ENCODE measurements at regions of chr1 and their contacts with region 1.

Region 1: GRCh38 chr1:47997289-47998200 is at the start of gene TRABD2B:
- DNase-seq: peak; percentile 34
- ATAC-seq: peak; percentile 99
- H3K4me3 ChIP-seq: peak within 1 kb of the TSS; percentile 49
- H3K27ac ChIP-seq: no peak within 1 kb of the TSS
- H3K4me1 ChIP-seq: no peaks in the 10 kb centered on the region
- H3K27me3 ChIP-seq: peaks cover 35% of the 10 kb centered on the region
- CTCF ChIP-seq: peak; percentile 87
- POLR2A ChIP-seq: no peak
- RAD21 ChIP-seq: peak; percentile 53
- total RNA-seq, gene TRABD2B: not detected in 2 replicates

Region 2: GRCh38 chr1:47679301-47679791 is 318.2 kb before region 1 on chr1:
- CTCF ChIA-PET with region 1: no interaction called
- POLR2A ChIA-PET with region 1: no interaction called
- dilution Hi-C with region 1: no loop called
- in situ Hi-C with region 1: no loop called
- intact Hi-C with region 1: no loop called
- DNase-seq: no peak
- ATAC-seq: no peak
- H3K4me3 ChIP-seq: no peak overlapping the region
- H3K27ac ChIP-seq: no peak overlapping the region
- H3K4me1 ChIP-seq: no peaks in the 10 kb centered on the region
- H3K27me3 ChIP-seq: no peaks in the 10 kb centered on the region
- CTCF ChIP-seq: no peak
- POLR2A ChIP-seq: no peak
- RAD21 ChIP-seq: no peak

Region 3: GRCh38 chr1:48202030-48202752 is 204.6 kb after region 1 on chr1:
- CTCF ChIA-PET with region 1: no interaction called
- POLR2A ChIA-PET with region 1: no interaction called
- dilution Hi-C with region 1: no loop called
- in situ Hi-C with region 1: no loop called
- intact Hi-C with region 1: loop called (anchors 10 kb)
- DNase-seq: peak; percentile 81
- ATAC-seq: peak; percentile 97
- H3K4me3 ChIP-seq: no peak overlapping the region
- H3K27ac ChIP-seq: no peak overlapping the region
- H3K4me1 ChIP-seq: no peaks in the 10 kb centered on the region
- H3K27me3 ChIP-seq: no peaks in the 10 kb centered on the region; the same call in 1 of the 2 replicates
- CTCF ChIP-seq: peak; percentile 87
- POLR2A ChIP-seq: no peak
- RAD21 ChIP-seq: peak; percentile 65

Measured in IMR-90 (cell line).